MCF 10A (cell line): ENCODE measurements at regions of chr6 and their contacts with region 1.

Region 1: DNA sequence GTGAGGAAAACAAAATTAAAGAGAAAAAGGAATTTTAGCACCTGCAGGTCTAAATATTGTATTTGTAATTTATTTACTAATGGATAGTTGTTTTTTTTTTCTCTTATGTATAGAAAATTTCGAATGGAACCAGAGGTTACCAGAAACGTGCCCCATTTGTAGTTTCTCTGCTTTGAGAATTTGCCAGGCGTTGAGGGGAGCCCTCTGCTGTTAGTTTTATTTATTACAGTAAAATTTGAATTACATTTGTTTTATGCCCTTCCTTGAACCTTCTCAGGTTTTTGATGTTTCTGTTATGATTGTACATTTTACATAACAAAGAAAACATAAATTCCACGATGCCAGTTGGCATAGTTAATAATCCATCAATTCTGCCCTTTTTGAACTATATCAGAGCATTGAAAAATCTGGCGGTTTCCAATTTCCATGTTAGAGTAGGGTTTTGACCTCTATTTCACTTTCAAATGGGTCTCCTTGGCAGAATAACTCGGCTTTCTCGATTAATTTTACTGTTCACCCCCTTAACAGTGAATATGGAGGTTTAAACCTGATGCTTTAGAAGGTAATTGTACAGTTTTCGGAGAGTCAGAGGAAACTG is 35.1 kb upstream of the RFPL4B start:
- DNase-seq: peak; percentile 49
- H3K4me3 Mint-ChIP-seq: no peak overlapping the region
- H3K27ac Mint-ChIP-seq: peak overlapping the region; percentile 13
- H3K4me1 Mint-ChIP-seq: peaks cover 13% of the 10 kb centered on the region
- H3K27me3 Mint-ChIP-seq: no peaks in the 10 kb centered on the region
- CTCF ChIP-seq: peak; percentile 31

Region 2: GRCh38 chr6:112087136-112087911 is 224.7 kb before region 1 on chr6 and contains the starts of genes FAM229B and TUBE1:
- CTCF ChIA-PET with region 1: interaction called, 3 read pairs
- POLR2A ChIA-PET with region 1: no interaction called
- intact Hi-C with region 1: loop called (anchors 5 kb)
- DNase-seq: peak; percentile 93
- H3K4me3 Mint-ChIP-seq: no peak within 1 kb of the TSS
- H3K27ac Mint-ChIP-seq: no peak within 1 kb of the TSS
- H3K4me1 Mint-ChIP-seq: no peaks in the 10 kb centered on the region
- H3K27me3 Mint-ChIP-seq: no peaks in the 10 kb centered on the region
- CTCF ChIP-seq: no peak
- total RNA-seq, gene FAM229B: 10.8 and 11.3 TPM in 2 replicates
- total RNA-seq, gene TUBE1: 42.9 and 47.7 TPM in 2 replicates

Region 3: DNA sequence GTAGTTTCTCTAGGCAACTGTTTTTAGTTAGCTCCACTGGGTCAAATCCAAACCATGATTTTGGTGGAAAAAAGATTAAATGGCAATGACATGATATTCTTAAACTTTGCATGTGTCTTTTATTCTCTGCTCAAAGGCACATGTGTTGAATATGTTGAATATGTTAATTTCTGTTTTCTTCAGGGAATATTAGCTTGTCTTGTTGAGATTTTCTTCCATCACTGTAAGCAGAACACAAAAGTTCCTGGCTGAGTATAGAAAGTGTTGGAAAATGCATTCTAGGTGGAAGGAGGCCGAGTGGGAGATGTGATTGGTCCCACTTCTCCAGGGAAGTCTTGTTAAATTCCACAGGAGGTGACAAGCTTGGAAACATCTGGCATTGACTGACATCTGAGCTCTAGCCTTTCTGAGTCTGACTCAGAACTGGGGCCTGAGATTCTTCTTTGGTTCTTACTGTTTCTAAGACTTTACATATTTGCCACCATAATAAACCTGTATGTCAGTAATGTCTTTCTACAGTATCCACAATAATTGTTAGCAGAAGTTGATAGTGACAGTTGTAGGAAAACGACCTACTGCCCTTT is 138.7 kb before region 1 on chr6:
- CTCF ChIA-PET with region 1: interaction called, 140 read pairs
- POLR2A ChIA-PET with region 1: interaction called, 3 read pairs
- intact Hi-C with region 1: no loop called
- DNase-seq: no peak
- H3K4me3 Mint-ChIP-seq: no peak overlapping the region
- H3K27ac Mint-ChIP-seq: no peak overlapping the region
- H3K4me1 Mint-ChIP-seq: no peaks in the 10 kb centered on the region
- H3K27me3 Mint-ChIP-seq: peaks cover 35% of the 10 kb centered on the region
- CTCF ChIP-seq: no peak

Region 4: GRCh38 chr6:112282221-112282620 is 29.8 kb before region 1 on chr6:
- CTCF ChIA-PET with region 1: interaction called, 10 read pairs
- POLR2A ChIA-PET with region 1: interaction called, 3 read pairs
- intact Hi-C with region 1: no loop called
- DNase-seq: peak; percentile 64
- H3K4me3 Mint-ChIP-seq: no peak overlapping the region
- H3K27ac Mint-ChIP-seq: peak overlapping the region; percentile 25
- H3K4me1 Mint-ChIP-seq: peaks cover 6% of the 10 kb centered on the region
- H3K27me3 Mint-ChIP-seq: no peaks in the 10 kb centered on the region
- CTCF ChIP-seq: peak; percentile 31

Region 5: DNA sequence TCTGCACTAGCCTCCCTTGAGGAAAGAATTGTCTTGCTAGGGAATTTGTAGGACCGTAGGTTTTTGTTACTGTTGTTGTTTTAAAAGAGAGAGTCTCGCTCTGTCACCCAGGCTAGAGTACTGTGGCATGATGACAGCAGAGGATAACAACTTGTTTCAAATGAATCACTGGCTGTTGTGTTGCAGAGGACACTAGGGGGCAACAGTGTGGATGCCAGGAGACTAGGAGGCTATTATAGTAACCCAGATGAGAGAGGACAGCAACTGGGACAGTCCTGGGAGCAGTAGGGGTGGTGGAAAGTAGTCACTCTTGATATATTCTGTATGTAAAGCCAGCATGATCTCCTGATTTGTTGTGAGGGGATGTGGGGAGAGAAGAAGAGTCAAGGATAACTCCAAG is 15.9 kb before region 1 on chr6:
- CTCF ChIA-PET with region 1: interaction called, 10 read pairs
- POLR2A ChIA-PET with region 1: interaction called, 6 read pairs
- intact Hi-C with region 1: no loop called
- DNase-seq: peak; percentile 55
- H3K4me3 Mint-ChIP-seq: no peak overlapping the region
- H3K27ac Mint-ChIP-seq: no peak overlapping the region
- H3K4me1 Mint-ChIP-seq: peaks cover 25% of the 10 kb centered on the region
- H3K27me3 Mint-ChIP-seq: no peaks in the 10 kb centered on the region
- CTCF ChIP-seq: peak; percentile 21

Region 6: GRCh38 chr6:112372226-112372806 is 60.3 kb after region 1 on chr6:
- CTCF ChIA-PET with region 1: interaction called, 25 read pairs
- POLR2A ChIA-PET with region 1: no interaction called
- intact Hi-C with region 1: loop called (anchors 10 kb)
- DNase-seq: peak; percentile 47
- H3K4me3 Mint-ChIP-seq: no peak overlapping the region
- H3K27ac Mint-ChIP-seq: no peak overlapping the region
- H3K4me1 Mint-ChIP-seq: peaks cover 5% of the 10 kb centered on the region
- H3K27me3 Mint-ChIP-seq: no peaks in the 10 kb centered on the region
- CTCF ChIP-seq: peak; percentile 36